ENCODE measurements at regions of chr14 and their contacts with region 1.

Region 1: GRCh38 chr14:35416108-35416750 is 11.7 kb upstream of the NFKBIA start:
- DNase-seq: no peak
- ATAC-seq: no peak
- H3K4me3 ChIP-seq: no peak overlapping the region
- H3K27ac ChIP-seq: peak overlapping the region in 1 of 2 donors; percentile 12
- H3K4me1 ChIP-seq: peaks cover 2 to 4% of the 10 kb centered on the region in 2 donors
- H3K27me3 ChIP-seq: no peaks in the 10 kb centered on the region

Region 2: DNA sequence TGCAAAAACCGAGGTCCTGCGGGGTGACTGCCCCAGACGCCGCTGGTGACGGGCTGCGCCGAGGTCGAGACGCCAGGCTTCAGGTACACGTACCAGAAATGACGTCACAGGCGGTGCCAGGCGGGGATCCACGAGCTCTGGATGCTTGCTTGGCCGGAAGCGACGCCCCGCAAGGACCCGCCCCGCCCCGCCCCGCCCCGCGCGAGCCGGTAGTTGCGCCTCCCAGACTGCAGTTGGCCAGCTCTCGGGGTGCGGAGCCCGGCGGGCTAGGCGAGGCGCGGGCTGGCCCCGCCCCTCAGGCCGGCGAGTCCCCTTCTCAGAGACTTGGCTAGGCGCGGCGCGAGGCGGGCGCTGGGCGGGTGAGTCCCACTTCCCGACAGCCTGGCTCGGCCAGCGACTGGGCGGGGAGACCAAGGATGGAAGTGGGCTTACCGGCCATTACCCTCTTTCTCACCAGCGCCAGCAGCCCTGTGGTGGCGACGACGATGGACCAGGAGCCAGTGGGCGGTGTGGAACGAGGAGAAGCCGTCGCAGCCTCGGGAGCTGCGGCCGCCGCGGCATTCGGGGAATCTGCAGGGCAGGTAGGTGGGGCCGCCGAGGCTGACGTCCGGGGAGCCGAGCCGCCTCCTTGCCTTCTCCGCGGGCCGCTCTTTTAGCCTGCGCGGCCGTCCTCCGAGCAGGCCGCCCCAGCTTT is 370.0 kb before region 1 on chr14 and contains the start of gene FAM177A1:
- intact Hi-C with region 1: loop called in 1 of 2 experiments (anchors 10 kb)
- DNase-seq: peak; percentile 99 to 100
- ATAC-seq: peak; percentile 99
- H3K4me3 ChIP-seq: peak within 1 kb of the TSS; percentile 67 to 83
- H3K27ac ChIP-seq: peak within 1 kb of the TSS; percentile 97 to 99
- H3K4me1 ChIP-seq: peaks cover 0 to 6% of the 10 kb centered on the region in 2 donors
- H3K27me3 ChIP-seq: no peaks in the 10 kb centered on the region
- total RNA-seq, gene FAM177A1: 70.7 to 94.0 TPM

Region 3: DNA sequence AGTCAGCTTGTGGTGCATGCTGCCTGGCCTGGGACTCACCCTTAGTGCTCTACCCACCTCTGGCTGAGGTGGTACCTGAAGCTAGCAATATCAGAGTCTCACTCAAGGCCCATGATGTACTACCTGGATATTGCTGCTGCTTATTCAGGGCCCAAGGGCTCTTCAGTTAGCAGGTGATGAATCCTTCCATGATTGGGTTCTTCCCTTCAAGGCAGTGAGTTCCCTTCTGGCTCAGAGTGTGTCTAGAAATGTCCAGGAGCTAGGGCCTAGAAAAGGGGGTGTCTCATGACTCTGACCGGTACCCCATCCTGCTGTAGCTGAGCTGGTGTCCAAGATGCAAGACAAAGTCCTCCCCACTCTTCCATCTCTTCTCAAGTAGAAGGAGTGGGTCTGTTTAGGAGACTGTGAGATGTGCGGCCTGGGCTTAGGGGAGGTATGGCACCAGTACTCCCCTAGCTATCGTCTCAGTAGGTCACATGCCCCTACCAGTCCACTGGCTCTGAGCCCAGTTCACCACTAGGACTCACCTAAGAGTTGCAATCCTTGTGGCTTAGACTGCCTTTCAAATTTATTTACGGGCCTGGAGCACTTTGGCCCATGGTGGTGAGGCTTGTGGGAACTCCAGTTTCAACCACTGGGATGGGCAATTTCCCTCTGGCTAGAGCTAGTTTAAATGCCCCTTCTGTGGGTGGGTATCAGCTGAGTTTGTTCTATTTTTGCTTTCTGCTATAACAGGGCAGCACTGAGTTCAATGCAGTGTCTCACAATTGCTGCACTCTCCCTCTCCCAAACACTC is 281.7 kb before region 1 on chr14:
- intact Hi-C with region 1: loop called (anchors 5 kb)
- DNase-seq: no peak
- ATAC-seq: no peak
- H3K4me3 ChIP-seq: no peak overlapping the region
- H3K27ac ChIP-seq: no peak overlapping the region
- H3K4me1 ChIP-seq: no peaks in the 10 kb centered on the region
- H3K27me3 ChIP-seq: no peaks in the 10 kb centered on the region

Region 4: DNA sequence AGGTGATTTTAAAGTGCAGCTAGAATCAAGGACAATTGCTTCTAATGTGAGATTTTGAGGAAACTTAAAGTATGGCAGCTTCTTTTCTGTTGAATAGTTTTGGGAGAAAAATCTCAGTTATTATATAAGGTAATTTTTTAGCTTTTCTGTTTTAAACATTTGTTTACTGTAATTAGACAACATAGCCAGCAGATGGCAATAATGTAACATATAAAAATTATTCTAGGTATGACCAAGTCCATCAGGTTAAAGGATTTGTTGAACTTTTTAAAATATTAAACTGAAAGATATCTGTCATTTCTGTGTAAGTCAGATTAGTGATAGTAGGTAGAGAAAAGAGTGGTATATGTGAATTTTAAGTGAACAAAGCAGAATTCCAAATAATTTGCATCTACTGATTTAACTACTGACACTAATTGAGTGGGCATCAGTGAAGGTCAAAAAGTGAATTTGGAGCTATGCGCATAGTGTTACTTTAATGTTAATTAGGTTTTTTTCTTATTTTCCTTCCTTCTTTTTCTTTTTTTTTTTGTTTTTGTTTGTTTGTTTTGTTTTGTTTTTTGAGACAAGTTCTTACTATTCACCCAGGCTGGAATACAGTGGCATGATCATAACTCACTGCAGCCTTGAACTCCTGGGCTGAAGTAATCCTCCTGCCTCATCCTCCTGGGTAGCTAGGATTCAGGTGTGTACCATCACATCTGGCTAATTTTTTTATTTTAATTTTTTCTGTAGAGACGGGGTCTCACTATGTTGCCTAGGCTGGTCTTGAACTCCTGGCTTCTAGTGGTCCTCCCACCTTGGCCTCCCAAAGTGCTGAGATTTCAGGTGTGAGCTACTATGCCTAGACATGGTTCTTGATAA is 275.3 kb before region 1 on chr14:
- intact Hi-C with region 1: loop called (anchors 5 kb)
- DNase-seq: no peak
- ATAC-seq: no peak
- H3K4me3 ChIP-seq: no peak overlapping the region
- H3K27ac ChIP-seq: no peak overlapping the region
- H3K4me1 ChIP-seq: no peaks in the 10 kb centered on the region
- H3K27me3 ChIP-seq: no peaks in the 10 kb centered on the region

Region 5: DNA sequence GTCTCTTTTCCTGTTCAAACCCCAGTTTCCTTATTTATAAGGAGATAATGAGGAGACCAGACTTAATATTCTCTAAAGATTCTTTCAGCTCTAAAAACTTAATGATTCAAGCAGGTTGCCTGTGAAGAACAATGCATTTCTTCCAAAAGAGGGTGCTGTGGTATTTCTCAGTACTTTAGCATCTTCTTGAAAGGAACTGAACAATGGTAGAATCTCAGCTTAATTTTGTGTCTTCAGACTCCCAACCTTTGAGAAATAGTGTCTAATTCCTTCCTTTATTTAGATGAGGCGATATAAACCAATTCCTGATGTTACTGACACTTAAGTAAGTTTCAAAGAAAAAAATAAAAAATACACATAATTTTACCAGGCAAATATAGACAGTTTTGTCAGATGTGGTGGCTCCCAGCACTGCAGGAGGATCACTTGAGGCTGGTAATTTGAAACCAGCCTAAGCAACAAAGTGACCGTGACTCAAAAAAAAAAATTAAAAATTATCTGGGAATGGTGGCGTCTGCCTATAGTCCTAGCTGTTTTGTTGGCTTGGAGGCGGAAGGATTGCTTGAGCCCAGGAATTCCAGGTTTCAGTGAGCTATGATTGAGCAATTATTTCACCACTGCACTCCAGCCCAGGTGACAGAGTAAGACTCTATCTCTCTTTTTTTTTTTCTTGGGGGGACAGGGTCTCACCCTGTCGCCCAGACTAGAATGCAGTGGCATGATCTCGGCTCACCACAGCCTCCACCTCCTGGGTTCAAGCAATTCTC is 200.9 kb before region 1 on chr14:
- intact Hi-C with region 1: loop called in 1 of 2 experiments (anchors 2 kb)
- DNase-seq: no peak
- ATAC-seq: no peak
- H3K4me3 ChIP-seq: no peak overlapping the region
- H3K27ac ChIP-seq: no peak overlapping the region
- H3K4me1 ChIP-seq: no peaks in the 10 kb centered on the region
- H3K27me3 ChIP-seq: no peaks in the 10 kb centered on the region

Region 6: GRCh38 chr14:35385042-35385839 is 31.0 kb before region 1 on chr14:
- intact Hi-C with region 1: no loop called
- DNase-seq: peak; percentile 87 to 93
- ATAC-seq: peak; percentile 93
- H3K4me3 ChIP-seq: no peak overlapping the region
- H3K27ac ChIP-seq: peak overlapping the region in 1 of 2 donors; percentile 66
- H3K4me1 ChIP-seq: peaks cover 0 to 4% of the 10 kb centered on the region in 2 donors
- H3K27me3 ChIP-seq: no peaks in the 10 kb centered on the region

Region 7: GRCh38 chr14:35558680-35559079 is 142.5 kb after region 1 on chr14:
- intact Hi-C with region 1: no loop called
- DNase-seq: no peak
- ATAC-seq: no peak
- H3K4me3 ChIP-seq: no peak overlapping the region
- H3K27ac ChIP-seq: no peak overlapping the region
- H3K4me1 ChIP-seq: peaks cover 0 to 2% of the 10 kb centered on the region in 2 donors
- H3K27me3 ChIP-seq: no peaks in the 10 kb centered on the region

Region 8: GRCh38 chr14:35844494-35844893 is 428.3 kb after region 1 on chr14:
- intact Hi-C with region 1: no loop called
- DNase-seq: no peak
- ATAC-seq: no peak
- H3K4me3 ChIP-seq: no peak overlapping the region
- H3K27ac ChIP-seq: no peak overlapping the region
- H3K4me1 ChIP-seq: no peaks in the 10 kb centered on the region
- H3K27me3 ChIP-seq: no peaks in the 10 kb centered on the region